ENCODE measurements at regions of chr9 and their contacts with region 1.

Region 1: GRCh38 chr9:83238871-83239640 is 176.1 kb upstream of the RASEF start:
- DNase-seq: no peak
- ATAC-seq: peak; percentile 67

Region 2: GRCh38 chr9:83304686-83305085 is 65.6 kb after region 1 on chr9:
- intact Hi-C with region 1: no loop called
- DNase-seq: peak; percentile 86
- ATAC-seq: peak; percentile 97

Region 3: GRCh38 chr9:83707768-83708514 is 468.9 kb after region 1 on chr9 and contains the start of gene UBQLN1:
- intact Hi-C with region 1: loop called (anchors 10 kb)
- DNase-seq: peak; percentile 98
- ATAC-seq: peak; percentile 97
- total RNA-seq, gene UBQLN1: 78.7 TPM